Mucosa of descending colon (tissue), 3 donors: ENCODE measurements at regions of chr1 and their contacts with region 1.

Region 1: DNA sequence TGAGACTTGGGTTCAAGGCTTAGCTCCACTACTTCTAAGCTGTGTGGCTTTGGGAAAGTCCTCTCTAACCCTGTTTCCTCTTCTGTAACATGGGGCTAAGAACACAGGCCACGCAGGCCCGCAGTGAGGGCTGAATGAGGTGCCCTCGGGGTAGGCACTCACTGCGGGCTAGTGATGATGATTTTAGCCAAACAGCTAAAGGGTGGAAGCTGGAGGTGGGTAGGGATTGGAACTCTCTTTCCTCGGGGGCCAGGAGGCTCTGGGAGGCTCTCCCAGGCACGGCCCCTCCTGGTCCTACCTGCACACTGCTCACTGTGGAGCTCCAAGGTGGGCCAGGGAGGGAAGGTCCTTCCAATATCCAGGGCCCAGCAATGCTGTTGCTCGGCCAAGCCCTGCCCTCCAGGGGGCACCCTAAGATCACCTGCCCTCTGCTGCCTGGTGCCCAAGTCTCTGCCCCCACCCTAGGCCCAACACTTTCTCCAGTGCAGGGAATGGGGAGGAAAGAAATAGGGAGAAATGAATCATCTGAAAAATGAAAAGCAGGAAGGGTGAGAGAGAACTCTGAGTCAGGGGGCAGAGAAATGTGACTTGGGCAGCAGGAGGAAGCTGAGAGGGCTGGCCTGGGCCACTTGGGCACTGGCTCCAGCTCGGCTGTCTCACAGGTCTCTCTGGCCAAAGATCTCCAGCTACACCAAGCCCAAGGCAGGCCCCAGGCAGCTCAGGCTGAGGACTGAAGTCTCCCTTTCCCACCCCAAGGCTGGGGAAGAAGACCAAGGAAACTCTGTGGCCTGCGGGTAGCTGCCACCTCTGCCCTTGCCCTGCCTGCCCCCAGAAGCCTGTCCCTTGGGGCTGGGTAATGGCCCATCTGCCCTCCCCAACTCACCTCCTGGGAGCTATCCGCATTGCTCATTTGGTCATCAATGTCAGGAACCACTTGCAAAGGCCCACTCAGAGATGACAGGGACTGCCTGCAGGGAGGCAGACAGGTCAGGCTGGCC is 19.3 kb upstream of the EVA1B start:
- DNase-seq: peak; percentile 45 to 81 (median 73)
- ATAC-seq: peak; percentile 76
- H3K4me3 ChIP-seq: no peak overlapping the region
- H3K4me1 ChIP-seq: no peaks in the 10 kb centered on the region
- CTCF ChIP-seq: no peak

Region 2: DNA sequence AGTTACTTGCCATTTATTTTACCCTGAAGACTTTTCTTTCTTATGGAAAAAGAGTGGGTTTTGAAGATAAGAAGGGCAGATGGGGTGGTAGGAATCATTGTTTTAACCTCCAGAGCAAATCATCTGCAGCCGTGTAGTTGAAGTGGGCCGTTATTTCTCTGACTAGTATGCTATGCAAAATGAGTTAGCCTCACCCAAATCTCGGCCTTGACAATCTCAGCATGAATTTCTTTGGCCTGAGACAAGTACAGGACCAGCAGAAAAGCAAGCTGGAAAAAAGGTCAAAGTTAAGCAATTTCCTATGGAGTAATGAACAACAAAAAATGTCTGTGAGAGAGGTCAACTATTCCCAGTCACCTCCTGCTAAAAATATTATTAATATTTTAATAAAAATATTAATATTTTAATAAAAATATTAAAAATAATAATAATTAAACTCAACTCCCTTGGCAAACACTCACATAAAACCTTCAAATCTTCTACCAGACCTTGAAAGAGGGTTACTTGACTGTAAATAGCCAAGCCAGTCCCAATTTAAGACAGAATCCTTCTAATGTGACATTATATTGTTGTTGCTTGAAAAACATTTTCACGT is 265.7 kb before region 1 on chr1:
- intact Hi-C with region 1: no loop called
- DNase-seq: no peak
- ATAC-seq: no peak
- H3K4me3 ChIP-seq: no peak overlapping the region
- H3K4me1 ChIP-seq: no peaks in the 10 kb centered on the region
- CTCF ChIP-seq: no peak

Region 3: GRCh38 chr1:36420836-36421664 is 78.3 kb after region 1 on chr1:
- intact Hi-C with region 1: loop called (anchors 5 kb)
- DNase-seq: peak; percentile 88 to 95 (median 94)
- ATAC-seq: peak; percentile 99
- H3K4me3 ChIP-seq: no peak overlapping the region
- H3K4me1 ChIP-seq: peaks cover 2% of the 10 kb centered on the region
- CTCF ChIP-seq: peak; percentile 87

Region 4: DNA sequence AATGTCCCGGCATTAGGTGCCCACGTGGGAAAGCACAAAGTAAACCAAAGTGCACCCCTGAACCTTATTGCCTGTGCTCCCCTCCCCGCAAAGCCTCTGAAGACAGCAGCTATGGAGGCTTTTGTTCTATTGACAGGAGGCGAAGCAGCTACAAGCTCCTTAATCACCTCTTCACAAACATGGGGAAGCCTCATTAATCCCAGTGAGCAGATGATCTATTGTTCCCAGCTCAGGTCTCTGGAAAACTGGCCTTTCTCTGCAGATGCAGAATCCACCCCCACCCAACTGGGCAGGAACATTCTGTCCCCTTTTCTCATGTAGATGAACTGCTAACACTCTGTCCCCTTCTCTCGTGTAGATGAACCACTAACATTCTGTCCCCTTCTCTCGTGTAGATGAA is 330.4 kb after region 1 on chr1:
- intact Hi-C with region 1: no loop called
- DNase-seq: no peak
- ATAC-seq: no peak
- H3K4me3 ChIP-seq: no peak overlapping the region
- H3K4me1 ChIP-seq: no peaks in the 10 kb centered on the region
- CTCF ChIP-seq: no peak